Lower leg skin (tissue), 4 donors: ENCODE measurements at regions of chr1 and their contacts with region 1.

Region 1: GRCh38 chr1:157992031-157992832 is 1.2 kb upstream of the KIRREL1 start:
- DNase-seq: peak; percentile 67 to 92
- H3K4me3 ChIP-seq: no peak overlapping the region
- CTCF ChIP-seq: peak in 1 of 3 donors; percentile 81
- POLR2A ChIP-seq: no peak

Region 2: DNA sequence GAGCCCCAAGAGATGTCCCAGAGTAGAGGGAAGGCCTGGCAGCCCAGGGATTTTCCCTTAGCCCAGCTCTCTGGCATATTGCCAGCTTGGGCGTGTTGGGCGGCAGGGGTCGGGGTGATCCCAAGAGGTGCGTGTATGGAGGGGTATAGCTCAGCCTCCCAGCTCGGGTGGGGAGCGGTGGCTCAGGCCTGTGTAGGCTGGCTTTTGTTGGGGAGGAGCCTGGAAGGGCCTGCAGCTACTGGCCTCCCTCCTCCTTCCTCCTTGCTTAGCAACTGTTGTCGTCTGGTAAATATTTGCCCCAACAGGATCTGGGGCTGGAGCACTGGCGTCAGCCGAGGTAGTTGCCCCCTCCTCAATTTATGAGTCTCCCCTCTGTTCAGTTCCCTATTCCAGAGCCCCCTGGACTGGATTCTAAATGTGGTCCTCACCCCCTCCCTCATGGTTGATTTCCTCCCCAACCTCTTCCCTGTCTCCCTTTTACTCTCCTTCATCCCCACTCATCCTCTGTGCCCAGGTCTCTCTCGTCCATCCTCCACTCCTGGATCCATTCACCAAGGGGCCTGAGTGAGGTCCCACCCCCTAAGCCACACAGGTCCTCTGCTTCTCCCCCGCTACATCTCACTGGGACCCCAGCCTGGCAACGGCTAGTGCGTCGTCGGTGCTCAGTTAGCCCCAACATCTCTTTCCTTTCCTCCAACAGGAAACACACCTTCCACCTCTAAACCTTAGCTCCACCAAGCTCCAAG is 1888.0 kb before region 1 on chr1:
- intact Hi-C with region 1: no loop called
- DNase-seq: peak; percentile 89 to 96
- H3K4me3 ChIP-seq: no peak overlapping the region
- CTCF ChIP-seq: no peak
- POLR2A ChIP-seq: no peak

Region 3: DNA sequence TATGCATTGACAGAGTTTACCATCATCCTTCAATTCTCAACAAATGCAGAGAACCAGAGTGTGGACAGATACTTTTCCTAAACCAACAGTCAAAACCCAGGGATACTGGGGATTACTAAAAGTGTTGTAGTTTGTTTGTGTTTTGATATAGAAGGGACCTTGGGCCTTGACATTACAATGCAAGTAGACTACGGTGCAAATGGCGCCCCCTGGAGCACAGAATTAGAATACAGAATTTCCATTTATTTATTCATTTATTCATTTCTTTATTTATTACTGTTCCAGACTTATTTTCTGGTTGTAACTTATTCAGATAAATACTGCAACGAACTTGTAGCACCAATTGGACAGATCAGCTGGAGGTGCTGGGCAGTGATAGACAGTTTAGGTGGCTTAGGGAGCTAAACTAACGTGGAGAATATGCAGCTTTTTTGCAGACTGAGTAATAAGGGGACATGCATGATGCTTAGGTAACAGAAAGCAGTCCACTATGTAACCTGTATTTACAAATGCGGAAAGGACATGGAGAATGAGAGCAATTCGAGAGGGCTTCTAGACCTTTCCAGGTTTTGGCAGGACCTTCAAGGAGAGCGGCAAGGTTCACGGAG is 43.8 kb after region 1 on chr1:
- intact Hi-C with region 1: loop called (anchors 5 kb)
- DNase-seq: no peak
- H3K4me3 ChIP-seq: no peak overlapping the region
- CTCF ChIP-seq: peak in 1 of 3 donors; percentile 40
- POLR2A ChIP-seq: no peak

Region 4: DNA sequence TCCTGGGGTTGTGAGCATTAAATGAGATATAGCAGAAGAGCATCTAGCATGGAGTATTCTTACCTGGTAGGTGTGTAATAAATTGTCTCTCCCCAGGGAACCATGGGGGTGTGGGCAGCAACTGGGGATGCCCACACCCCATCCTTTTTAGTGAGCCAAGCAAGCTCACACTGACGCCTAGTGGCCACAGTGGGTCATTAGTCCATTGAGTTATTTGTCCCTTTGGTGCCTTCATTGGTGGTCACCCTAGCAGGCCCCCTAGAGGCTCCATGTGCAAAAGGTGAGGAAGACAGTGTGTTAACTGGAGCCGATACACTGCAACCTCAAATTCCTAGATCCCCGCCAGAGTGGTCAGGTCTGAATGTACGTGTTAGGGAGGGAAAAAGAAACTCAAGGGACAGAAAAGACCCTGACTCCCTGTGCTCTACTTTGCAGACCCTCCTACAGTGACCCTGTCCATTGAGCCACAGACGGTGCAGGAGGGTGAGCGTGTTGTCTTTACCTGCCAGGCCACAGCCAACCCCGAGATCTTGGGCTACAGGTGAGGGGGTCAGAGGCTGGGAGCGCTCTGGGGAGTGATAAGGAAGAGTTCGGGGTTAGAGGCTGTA is 95.2 kb after region 1 on chr1:
- intact Hi-C with region 1: loop called (anchors 5 kb)
- DNase-seq: peak in 1 of 2 donors; percentile 33
- H3K4me3 ChIP-seq: no peak overlapping the region
- CTCF ChIP-seq: no peak
- POLR2A ChIP-seq: no peak